Mucosa of descending colon (tissue), 3 donors: ENCODE measurements at regions of chr5 and their contacts with region 1.

Region 1: DNA sequence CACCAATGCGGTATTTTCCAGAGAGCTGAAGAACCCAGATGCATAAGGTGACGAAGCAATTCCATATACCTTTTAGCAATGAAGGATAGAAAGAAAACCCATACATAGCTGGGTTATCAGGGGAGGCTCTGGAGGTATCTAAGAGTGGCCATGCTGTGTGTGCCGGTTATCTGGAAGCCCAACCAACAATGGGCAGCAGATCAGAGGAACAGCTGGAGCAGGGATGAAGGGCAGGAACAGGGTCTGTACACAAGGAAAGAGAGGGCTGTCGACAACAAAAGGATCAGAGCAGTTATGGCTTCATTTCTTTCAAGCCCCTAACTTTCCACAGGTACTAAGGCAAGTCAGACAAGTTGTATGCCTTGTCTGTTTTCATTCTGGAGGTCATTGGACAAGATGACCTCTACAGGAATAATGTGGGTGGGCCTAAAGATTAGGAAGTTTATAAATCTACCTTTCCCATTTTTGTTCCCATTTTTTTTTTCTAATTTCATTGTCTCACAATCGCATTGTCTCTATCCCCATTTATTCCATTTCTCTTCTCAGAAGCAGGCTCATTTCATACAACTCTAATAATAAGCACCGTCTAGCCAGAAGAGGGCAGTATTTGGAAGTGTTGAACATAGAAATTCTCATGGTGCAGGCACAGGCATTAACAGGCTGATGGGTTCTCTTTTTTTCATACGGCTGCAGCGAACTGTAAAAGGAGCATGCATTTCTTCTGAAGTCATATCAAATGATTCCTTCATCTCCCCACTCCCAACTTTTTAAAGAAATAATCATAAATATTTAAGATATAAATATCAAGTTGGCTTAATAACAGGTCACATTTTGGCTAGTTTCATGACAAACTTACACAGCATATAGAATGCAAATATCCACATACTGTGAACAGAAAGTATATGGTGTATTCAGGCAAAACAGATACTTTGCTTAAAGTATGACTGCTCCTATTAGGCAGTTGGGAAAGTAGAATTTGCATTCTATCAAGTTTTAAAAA is 63.5 kb downstream of the ZNF474 start:
- DNase-seq: peak in 1 of 3 donors; percentile 85
- ATAC-seq: peak; percentile 81
- H3K4me3 ChIP-seq: no peak overlapping the region
- H3K4me1 ChIP-seq: no peaks in the 10 kb centered on the region
- CTCF ChIP-seq: peak; percentile 41

Region 2: GRCh38 chr5:122311961-122312590 is 119.3 kb after region 1 on chr5 and contains the start of gene SNCAIP:
- intact Hi-C with region 1: loop called in 1 of 2 experiments (anchors 10 kb)
- DNase-seq: peak; percentile 35 to 56 (median 54)
- ATAC-seq: peak; percentile 76
- H3K4me3 ChIP-seq: peak within 1 kb of the TSS; percentile 9
- H3K4me1 ChIP-seq: no peaks in the 10 kb centered on the region
- CTCF ChIP-seq: no peak
- total RNA-seq, gene SNCAIP: 1.2 to 4.7 (median 2.7) TPM

Region 3: DNA sequence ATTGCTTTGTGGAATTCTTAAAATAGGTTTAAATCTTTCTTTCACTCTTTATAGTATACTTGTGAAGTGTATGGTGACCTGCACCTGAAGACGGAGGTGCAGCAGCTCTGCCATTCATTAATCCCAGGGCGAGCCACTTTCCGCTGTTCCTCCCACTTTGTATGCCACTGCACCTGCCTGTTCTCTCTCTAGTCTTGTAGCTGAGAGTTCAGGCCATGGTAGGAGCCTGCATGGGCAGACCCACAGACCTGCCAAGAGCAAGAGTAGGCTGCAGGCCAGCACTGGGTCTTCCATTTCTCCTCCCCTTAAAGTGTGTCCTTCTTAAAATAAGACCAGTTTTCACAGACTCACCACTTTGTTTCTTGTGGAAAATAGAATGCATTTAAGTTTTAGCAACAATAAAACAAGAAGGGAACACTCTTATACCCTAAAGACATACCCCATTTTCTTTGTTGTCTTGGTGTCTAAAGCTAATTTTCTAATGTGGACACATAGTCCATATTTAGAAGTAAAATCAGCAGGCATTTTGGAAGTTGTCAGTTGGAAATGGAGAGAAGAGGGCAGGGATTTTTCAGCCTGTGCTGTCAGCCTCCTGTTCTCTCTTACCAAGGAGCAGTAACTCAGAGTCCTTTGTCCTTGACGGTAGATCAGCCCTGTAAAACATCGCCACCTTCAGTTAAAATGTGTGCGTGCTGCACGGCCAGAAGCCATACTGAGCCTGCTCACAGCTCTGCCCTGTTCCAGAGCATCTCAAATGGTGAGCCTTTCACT is 222.4 kb after region 1 on chr5:
- intact Hi-C with region 1: loop called (anchors 5 kb)
- DNase-seq: peak in 2 of 3 donors; percentile 62 to 71
- ATAC-seq: peak; percentile 95
- H3K4me3 ChIP-seq: no peak overlapping the region
- H3K4me1 ChIP-seq: peaks cover under 1% of the 10 kb centered on the region
- CTCF ChIP-seq: no peak

Region 4: GRCh38 chr5:122498163-122498562 is 305.4 kb after region 1 on chr5:
- intact Hi-C with region 1: loop called in 1 of 2 experiments (anchors 10 kb)
- DNase-seq: no peak
- ATAC-seq: peak; percentile 32
- H3K4me3 ChIP-seq: no peak overlapping the region
- H3K4me1 ChIP-seq: no peaks in the 10 kb centered on the region
- CTCF ChIP-seq: no peak